Gastrocnemius medialis (tissue), 4 donors: ENCODE measurements at regions of chr11 and their contacts with region 1.

Region 1: GRCh38 chr11:64185816-64186498 is at the start of gene STIP1:
- DNase-seq: peak; percentile 100
- ATAC-seq: peak; percentile 84 to 85
- H3K4me3 ChIP-seq: peak within 1 kb of the TSS; percentile 68 to 85 (median 77)
- H3K27ac ChIP-seq: peak within 1 kb of the TSS; percentile 95 to 99 (median 98)
- H3K4me1 ChIP-seq: peaks cover 37 to 44% of the 10 kb centered on the region in 2 donors
- H3K27me3 ChIP-seq: no peaks in the 10 kb centered on the region
- CTCF ChIP-seq: no peak
- POLR2A ChIP-seq: peak in 1 of 2 donors; percentile 19
- total RNA-seq, gene STIP1: 141 to 193 (median 168) TPM

Region 2: GRCh38 chr11:63671322-63672155 is 514.4 kb before region 1 on chr11 and contains the start of gene ATL3:
- in situ Hi-C with region 1: no loop called
- intact Hi-C with region 1: loop called (anchors 10 kb)
- DNase-seq: peak; percentile 97 to 98
- ATAC-seq: peak; percentile 88 to 91
- H3K4me3 ChIP-seq: peak within 1 kb of the TSS; percentile 78 to 92 (median 85)
- H3K27ac ChIP-seq: peak within 1 kb of the TSS; percentile 96 to 98 (median 97)
- H3K4me1 ChIP-seq: peaks cover 46 to 48% of the 10 kb centered on the region in 2 donors
- H3K27me3 ChIP-seq: no peaks in the 10 kb centered on the region
- CTCF ChIP-seq: peak in 2 of 5 experiments; percentile 12 to 23
- POLR2A ChIP-seq: peak; percentile 75
- total RNA-seq, gene ATL3: 10.2 to 16.5 (median 12.4) TPM

Region 3: DNA sequence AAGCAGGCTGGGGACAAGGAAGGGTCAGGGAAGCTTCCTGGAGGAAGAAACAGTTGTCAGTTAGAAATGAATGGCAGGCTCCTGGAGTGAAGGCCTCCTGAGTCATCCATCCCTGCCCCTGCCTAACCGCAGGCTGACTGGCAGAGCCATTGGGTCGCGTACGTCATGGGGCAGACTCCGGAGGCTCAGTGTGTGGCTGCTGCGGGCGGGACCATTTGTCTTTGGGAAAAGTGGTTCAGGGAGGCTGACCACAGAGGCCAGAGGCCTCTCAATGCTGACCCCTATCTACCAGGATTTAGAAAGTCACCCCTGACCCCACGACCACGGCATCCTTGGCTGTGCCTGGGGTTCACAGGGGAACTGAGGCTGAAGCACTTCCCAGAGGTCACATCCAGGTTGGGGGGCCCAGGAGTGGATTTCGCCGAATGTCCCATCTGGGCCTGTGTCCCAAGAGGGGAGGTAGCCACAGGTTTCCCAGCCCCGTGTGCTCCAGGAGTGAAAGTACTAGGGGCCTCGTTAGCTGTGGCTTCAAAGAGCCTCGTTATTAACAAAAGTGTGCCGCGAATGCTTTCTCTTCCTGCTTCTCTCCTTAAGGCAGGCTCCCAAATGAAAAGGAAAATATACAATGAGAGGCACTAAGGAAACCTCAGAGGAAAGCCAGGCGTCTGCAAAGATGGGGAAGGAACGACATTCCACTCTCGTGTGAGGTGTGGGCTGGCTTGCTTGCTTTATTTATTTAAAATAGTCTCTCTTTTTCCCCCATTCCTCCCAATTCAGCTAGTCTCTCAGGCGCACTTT is 91.3 kb before region 1 on chr11:
- in situ Hi-C with region 1: no loop called
- intact Hi-C with region 1: no loop called
- DNase-seq: peak; percentile 80 to 90
- ATAC-seq: peak; percentile 94 to 97
- H3K4me3 ChIP-seq: no peak overlapping the region
- H3K27ac ChIP-seq: peak overlapping the region; percentile 50 to 83 (median 76)
- H3K4me1 ChIP-seq: peaks cover 56 to 72% of the 10 kb centered on the region in 2 donors
- H3K27me3 ChIP-seq: no peaks in the 10 kb centered on the region
- CTCF ChIP-seq: no peak
- POLR2A ChIP-seq: no peak

Region 4: DNA sequence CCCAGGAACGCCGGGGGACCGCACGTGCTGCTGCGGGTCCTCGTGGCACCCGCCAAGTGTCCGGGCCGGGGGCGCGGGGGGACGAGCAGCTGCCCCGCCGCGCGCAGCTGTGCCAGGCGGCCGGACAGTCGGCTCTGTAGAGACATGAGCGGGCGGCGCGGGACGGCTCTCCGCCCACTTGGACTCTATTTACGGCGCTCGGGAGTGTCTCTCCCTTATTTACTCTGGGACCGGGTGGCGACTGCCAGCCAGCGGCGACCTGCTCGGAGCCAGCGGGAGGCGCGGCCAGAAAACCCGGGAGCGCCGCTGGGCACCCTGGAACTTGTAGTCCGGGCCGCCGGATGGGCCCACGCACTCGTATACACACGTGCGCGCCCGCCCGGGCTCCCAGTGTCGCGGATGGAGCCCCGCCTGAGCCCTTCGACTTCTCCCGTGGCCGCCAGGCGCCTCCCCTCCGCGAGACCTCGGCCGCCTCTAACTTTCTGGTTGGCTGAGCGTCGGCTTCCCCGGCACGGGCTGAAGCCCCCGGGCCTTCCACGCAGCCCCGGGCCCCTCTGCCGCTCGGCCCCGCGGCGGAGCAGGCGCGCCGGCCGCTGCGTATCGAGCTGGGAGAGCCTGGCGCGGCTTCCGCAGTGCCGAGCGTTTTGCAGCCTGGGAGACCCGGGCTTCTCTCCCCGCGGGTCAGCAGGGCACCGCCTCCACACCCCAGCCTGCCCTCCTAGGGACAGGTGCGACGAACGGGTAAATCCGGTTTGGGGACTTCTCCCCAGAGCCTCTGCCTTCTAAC is 19.9 kb before region 1 on chr11 and contains the start of gene MACROD1:
- in situ Hi-C with region 1: no loop called
- intact Hi-C with region 1: loop called (anchors 2 kb)
- DNase-seq: peak; percentile 92 to 95
- ATAC-seq: peak; percentile 64 to 65
- H3K4me3 ChIP-seq: peak within 1 kb of the TSS; percentile 58 to 84 (median 77)
- H3K27ac ChIP-seq: peak within 1 kb of the TSS; percentile 94 to 98 (median 97)
- H3K4me1 ChIP-seq: peaks cover 22 to 29% of the 10 kb centered on the region in 2 donors
- H3K27me3 ChIP-seq: no peaks in the 10 kb centered on the region
- CTCF ChIP-seq: peak in 2 of 5 experiments; percentile 9 to 11
- POLR2A ChIP-seq: peak; percentile 96 to 98
- total RNA-seq, gene MACROD1: 162 to 308 (median 205) TPM

Region 5: GRCh38 chr11:64225612-64226506 is 39.9 kb after region 1 on chr11 and contains the starts of genes NUDT22 and TRPT1:
- in situ Hi-C with region 1: no loop called
- intact Hi-C with region 1: loop called (anchors 2 kb)
- DNase-seq: peak; percentile 85 to 90
- ATAC-seq: peak; percentile 70 to 72
- H3K4me3 ChIP-seq: peak within 1 kb of the TSS; percentile 86 to 92 (median 88)
- H3K27ac ChIP-seq: peak within 1 kb of the TSS; percentile 95 to 99 (median 96)
- H3K4me1 ChIP-seq: peaks cover 44 to 58% of the 10 kb centered on the region in 2 donors
- H3K27me3 ChIP-seq: no peaks in the 10 kb centered on the region
- CTCF ChIP-seq: peak in 4 of 5 experiments; percentile 6 to 37 (median 32)
- POLR2A ChIP-seq: peak; percentile 91 to 98
- total RNA-seq, gene NUDT22: 32.3 to 70.7 (median 53.4) TPM
- total RNA-seq, gene TRPT1: 80.9 to 231 (median 139) TPM